ENCODE measurements at regions of chr4 and their contacts with region 1.

Region 1: DNA sequence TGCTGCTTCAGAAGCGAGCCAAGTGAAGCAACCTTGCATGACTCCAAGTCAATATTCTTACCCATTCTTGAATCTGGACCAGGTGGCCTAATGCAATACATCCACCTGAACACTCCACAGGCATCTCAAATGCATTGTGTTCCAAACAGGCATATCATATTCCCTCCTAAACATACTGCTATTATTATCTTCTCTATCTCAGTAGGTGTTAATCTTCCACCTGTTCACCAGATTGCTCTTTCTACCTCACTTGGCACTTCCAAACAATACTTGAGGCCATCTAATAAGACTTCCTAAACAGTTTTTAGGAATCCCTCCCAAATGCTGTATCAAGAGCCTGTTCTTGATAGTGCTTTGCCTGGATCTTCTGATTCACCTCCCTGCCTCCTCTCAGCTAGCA is 90.7 kb downstream of the GPRIN3 start:
- DNase-seq: no peak
- H3K4me3 ChIP-seq: no peak overlapping the region
- CTCF ChIP-seq: no peak

Region 2: DNA sequence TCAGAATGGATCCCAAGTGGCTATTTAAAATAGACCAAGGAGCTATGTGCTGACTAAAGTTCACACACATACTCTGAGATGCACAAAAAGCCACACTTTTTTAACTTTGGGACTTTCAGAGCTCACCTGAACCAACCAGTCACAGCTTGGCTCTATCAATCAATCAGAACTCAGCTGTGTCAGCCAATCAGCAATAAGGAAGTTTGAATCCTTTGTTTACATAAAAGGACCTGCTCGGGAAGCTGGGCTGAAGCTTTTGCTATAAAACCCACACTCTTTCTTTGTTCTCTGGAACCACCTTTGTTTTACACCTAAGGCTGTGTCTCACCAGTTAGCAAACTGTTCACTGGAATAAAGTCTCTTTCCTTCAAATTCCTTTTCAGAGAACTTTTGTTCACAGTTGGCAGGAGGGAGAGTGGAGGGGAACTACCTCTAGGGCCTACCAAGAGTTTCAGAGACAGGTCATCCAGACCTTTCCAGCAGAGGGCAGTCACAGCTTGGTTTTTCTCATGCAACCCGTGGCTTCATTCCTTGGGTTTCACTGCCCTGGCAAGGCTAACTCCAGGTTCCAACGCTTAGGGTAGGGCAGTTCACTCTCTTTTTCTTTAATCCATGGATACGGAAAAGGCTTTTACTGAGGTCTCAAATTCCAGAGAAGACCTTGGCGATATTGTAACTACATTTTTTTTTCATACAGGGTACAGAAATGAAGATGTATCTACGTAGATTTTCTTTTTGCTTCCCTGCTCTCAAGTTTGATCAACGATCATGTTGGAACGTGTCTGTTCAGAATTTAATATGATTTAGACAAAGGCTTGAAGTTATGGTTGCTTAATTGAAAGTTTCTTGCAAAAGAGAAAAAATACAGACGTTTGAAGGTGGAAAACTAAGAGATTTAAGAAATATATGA is 10.1 kb after region 1 on chr4:
- CTCF ChIA-PET with region 1: interaction called, 11 read pairs
- POLR2A ChIA-PET with region 1: no interaction called
- DNase-seq: no peak
- H3K4me3 ChIP-seq: no peak overlapping the region
- CTCF ChIP-seq: peak; percentile 73